CD8-positive, alpha-beta memory T cell (primary cell): ENCODE measurements at regions of chr6 and their contacts with region 1.

Region 1: DNA sequence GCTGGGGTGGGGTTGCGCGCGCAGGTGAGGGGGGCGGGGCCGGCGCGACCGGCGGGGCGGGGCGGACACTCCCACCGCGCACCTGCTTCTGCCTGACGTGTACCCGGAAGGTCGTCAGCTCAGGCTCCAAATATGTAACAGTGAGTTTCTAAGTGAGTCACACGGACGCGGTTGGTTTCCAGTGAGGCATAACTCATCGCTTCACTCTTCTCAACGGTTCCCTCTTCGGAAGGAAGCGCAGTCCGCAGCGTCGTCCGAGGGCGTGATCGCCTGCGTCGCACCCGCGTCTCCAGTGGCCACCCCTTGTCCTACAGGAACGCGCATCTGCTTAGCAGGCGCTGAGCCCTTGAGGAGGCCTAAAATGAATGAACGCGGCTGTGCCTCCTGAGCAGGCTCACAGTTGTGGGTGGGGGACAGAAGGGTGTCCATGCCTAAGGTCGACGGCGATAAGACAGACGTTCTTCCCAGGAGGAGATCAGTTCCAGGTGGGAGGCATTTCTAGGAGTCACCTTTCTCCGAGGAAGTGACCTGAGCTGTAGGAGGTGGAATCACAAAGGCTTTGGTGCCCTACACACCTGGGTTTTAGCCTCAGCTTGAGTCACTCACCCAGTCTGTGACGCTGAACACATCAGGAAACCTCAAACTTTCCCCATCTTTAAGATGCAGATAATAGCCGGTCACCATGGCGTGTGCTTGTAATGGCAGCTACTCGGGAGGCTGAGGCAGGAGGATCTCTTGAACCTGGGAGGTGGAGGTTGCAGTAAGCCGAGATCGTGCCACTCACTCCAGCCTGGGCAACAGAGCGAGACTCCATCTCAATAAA is 50.9 kb upstream of the EZR start:
- DNase-seq: peak in 3 of 5 donors; percentile 41 to 99 (median 57)
- H3K4me3 ChIP-seq: peak overlapping the region; percentile 79
- H3K4me3 Mint-ChIP-seq: peak overlapping the region; percentile 81 to 94 (median 89)
- H3K27ac ChIP-seq: peak overlapping the region; percentile 98
- H3K27ac Mint-ChIP-seq: peak overlapping the region; percentile 96 to 100 (median 99)
- H3K4me1 ChIP-seq: peaks cover 20% of the 10 kb centered on the region
- H3K4me1 Mint-ChIP-seq: peaks cover 23 to 46% (median 36%) of the 10 kb centered on the region in 3 donors
- H3K27me3 ChIP-seq: no peaks in the 10 kb centered on the region
- H3K27me3 Mint-ChIP-seq: peaks cover 0 to 4% of the 10 kb centered on the region in 2 donors

Region 2: DNA sequence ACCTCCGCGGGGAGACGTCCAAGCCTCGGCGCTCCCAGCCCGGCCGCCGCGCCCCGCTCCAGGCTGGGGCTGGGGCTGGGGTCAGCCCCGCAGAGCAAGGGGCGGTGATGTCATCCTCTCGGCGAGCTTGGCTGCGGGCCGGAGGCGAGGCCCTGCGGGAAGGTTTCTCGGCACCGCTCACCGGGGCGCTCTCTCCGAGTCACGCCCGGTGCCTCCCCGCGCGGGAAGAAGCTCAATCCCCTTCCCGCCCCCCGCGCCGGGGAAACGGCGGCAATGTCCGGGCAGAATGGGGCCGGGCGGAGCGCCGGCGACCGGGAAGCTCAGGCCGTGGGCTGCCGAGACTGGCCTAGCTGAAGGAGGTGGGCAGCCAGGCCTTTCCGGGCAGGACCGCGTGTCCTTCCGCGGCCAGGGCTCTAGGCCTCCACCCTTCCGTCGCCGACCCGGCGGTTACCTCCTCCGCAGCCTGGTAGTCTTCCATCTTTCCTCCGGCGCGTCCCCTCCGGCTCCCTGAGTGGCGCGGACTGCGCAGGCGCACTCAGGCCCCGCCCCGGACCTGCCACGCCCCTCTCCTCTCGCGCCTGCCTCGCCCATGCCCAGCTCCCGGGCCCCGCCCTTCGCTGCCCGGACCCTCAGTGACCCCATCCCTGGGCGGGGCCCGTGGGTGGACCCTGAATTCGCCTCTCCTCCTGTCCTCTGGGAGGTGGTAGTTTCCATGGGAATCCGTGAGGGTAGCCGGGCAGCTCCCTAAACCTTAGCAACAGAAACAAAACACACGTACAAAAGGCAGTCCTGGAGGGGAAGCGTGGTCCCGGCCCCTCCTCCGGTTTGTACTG is 225.6 kb before region 1 on chr6 and contains the start of gene DYNLT1:
- CTCF ChIA-PET with region 1: no interaction called
- POLR2A ChIA-PET with region 1: no interaction called
- DNase-seq: peak; percentile 76 to 89 (median 86)
- H3K4me3 ChIP-seq: peak within 1 kb of the TSS; percentile 82
- H3K4me3 Mint-ChIP-seq: peak within 1 kb of the TSS; percentile 97 to 100 (median 99)
- H3K27ac ChIP-seq: peak within 1 kb of the TSS; percentile 93
- H3K27ac Mint-ChIP-seq: peak within 1 kb of the TSS; percentile 90 to 100 (median 99)
- H3K4me1 ChIP-seq: peaks cover 55% of the 10 kb centered on the region
- H3K4me1 Mint-ChIP-seq: peaks cover 57 to 82% (median 67%) of the 10 kb centered on the region in 3 donors
- H3K27me3 ChIP-seq: no peaks in the 10 kb centered on the region
- H3K27me3 Mint-ChIP-seq: no peaks in the 10 kb centered on the region
- total RNA-seq, gene DYNLT1: 94.8 to 103 TPM

Region 3: DNA sequence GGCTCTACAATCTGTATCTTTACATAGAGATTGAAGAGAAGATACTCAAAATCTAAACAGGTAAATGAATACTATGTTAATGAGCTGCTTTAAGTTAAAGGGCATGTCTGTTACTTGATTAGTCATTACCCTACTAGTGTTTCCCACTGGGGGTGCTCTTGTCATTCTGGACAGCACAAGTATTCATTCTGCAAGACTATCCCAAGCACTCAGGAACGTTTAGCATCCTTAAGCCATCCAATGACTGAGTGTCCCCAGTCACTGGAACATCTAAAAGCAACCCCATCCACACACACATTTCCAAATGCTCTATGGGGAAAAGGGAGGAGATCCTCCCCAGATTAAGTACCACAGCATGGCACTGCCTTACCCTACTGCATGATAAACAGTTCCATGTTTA is 76.6 kb before region 1 on chr6:
- CTCF ChIA-PET with region 1: interaction called, 7 read pairs
- POLR2A ChIA-PET with region 1: interaction called, 13 read pairs
- DNase-seq: peak in 1 of 5 donors; percentile 46
- H3K4me3 ChIP-seq: no peak overlapping the region
- H3K4me3 Mint-ChIP-seq: peak overlapping the region in 5 of 7 donors; percentile 7 to 63 (median 49)
- H3K27ac ChIP-seq: no peak overlapping the region
- H3K27ac Mint-ChIP-seq: peak overlapping the region; percentile 51 to 93 (median 80)
- H3K4me1 ChIP-seq: peaks cover 74% of the 10 kb centered on the region
- H3K4me1 Mint-ChIP-seq: peaks cover 80 to 96% (median 93%) of the 10 kb centered on the region in 3 donors
- H3K27me3 ChIP-seq: no peaks in the 10 kb centered on the region
- H3K27me3 Mint-ChIP-seq: peaks cover 0 to 2% of the 10 kb centered on the region in 2 donors

Region 4: DNA sequence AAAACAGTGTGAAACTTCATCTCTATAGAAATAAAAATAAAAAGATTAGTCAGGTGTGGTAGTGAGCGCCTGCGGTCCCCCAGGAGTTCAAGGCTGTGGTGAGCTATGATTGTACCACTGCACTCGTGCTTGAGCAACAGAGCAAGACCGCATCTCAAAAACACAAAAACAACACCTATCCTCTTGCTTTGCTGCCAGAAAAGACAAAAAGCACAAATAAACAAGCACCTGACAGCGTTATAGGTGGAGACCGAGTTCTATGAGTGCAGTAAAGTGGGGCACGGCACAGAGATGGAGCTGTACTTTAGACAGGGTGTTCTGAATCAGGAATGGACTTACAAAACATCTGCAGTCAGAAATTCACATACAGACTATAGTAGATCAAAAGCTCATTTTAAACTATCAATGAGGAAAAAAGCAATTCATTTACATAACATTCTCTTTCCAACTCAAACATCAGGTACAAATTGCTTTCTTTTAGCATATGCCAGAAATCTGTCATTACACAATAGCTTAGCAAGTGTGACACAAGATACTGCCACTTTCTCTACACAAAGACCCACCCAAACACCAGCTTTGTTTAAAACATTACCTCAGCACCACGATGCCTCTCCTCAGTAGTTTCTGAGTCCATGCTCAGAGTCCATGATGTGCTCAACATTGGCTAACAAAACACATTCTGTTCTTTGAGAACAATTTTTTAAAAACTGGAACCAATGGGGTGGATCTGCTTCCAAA is 60.9 kb before region 1 on chr6:
- CTCF ChIA-PET with region 1: interaction called, 17 read pairs
- POLR2A ChIA-PET with region 1: interaction called, 68 read pairs
- DNase-seq: peak; percentile 29 to 81 (median 49)
- H3K4me3 ChIP-seq: no peak overlapping the region
- H3K4me3 Mint-ChIP-seq: peak overlapping the region; percentile 54 to 81 (median 67)
- H3K27ac ChIP-seq: peak overlapping the region; percentile 1
- H3K27ac Mint-ChIP-seq: peak overlapping the region; percentile 71 to 96 (median 92)
- H3K4me1 ChIP-seq: peaks cover 94% of the 10 kb centered on the region
- H3K4me1 Mint-ChIP-seq: peaks cover 94 to 100% (median 100%) of the 10 kb centered on the region in 3 donors
- H3K27me3 ChIP-seq: no peaks in the 10 kb centered on the region
- H3K27me3 Mint-ChIP-seq: no peaks in the 10 kb centered on the region

Region 5: DNA sequence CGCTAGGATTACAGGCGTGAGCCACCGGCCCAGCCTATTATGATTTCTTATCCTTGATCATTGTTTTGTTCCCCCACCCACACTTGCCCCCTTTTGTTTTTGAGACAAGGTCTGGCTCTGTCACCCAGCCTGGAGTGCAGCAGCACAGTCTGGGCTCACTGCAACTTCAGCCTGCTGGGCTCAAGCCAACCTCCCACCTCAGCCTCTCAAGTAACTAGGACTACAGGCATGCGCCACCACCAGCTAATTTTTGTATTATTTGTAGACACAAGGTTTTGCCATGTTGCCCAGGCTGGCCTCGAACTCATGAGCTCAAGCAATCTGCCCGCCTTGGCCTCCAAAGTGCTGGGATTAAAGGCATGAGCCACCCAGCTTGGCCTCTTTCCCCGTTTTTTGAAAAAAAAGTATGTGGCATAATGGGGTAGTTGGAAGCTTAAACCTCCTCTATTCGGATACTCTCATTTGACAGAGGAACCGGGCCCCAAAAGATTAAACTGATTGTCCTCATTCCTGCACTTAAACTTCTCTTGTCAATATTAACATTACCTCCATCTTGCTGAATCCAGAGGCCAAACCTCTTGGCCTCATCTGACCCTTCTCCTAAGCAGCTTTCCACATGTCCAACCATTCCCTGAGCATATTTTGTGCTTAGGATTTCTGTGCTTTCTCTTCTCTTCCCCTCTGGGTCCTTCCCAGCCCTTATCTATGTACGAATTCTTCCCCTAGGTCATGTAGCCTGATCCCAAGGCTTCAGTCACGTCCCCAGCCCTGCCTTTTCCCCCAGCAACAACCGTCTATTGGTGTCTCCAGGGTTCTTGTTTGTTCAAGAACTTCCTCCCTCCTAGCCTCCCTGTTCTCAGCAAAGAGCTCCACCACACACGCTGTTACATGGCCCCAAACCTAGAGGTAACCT is 44.7 kb before region 1 on chr6:
- CTCF ChIA-PET with region 1: interaction called, 4 read pairs
- POLR2A ChIA-PET with region 1: interaction called, 116 read pairs
- DNase-seq: no peak
- H3K4me3 ChIP-seq: no peak overlapping the region
- H3K4me3 Mint-ChIP-seq: peak overlapping the region in 1 of 7 donors; percentile 66
- H3K27ac ChIP-seq: peak overlapping the region; percentile 65
- H3K27ac Mint-ChIP-seq: peak overlapping the region in 1 of 8 donors; percentile 17
- H3K4me1 ChIP-seq: no peaks in the 10 kb centered on the region
- H3K4me1 Mint-ChIP-seq: peaks cover 9 to 35% (median 10%) of the 10 kb centered on the region in 3 donors
- H3K27me3 ChIP-seq: no peaks in the 10 kb centered on the region
- H3K27me3 Mint-ChIP-seq: no peaks in the 10 kb centered on the region

Region 6: DNA sequence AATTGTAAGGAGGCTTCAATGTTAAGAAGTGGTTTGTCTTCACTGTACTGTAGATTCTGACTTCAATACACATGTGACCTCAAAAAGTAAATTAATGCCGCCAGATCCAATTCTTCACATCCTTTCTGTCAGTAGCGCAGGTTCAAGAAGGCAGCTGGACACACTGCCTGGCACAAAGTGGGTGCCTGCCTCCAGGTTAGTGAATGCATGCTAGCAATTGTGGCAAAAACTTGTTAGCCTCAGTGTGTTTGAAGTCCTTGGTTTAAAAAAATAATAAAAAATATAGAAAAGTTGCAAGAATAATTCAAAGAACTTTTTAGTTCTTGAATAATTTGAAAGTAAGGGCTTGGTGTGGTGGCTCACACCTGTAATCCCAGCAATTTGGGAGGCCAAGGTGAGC is 11.1 kb before region 1 on chr6:
- CTCF ChIA-PET with region 1: interaction called, 43 read pairs
- POLR2A ChIA-PET with region 1: interaction called, 186 read pairs
- DNase-seq: no peak
- H3K4me3 ChIP-seq: no peak overlapping the region
- H3K4me3 Mint-ChIP-seq: no peak overlapping the region
- H3K27ac ChIP-seq: no peak overlapping the region
- H3K27ac Mint-ChIP-seq: peak overlapping the region in 4 of 8 donors; percentile 9 to 83 (median 50)
- H3K4me1 ChIP-seq: peaks cover 26% of the 10 kb centered on the region
- H3K4me1 Mint-ChIP-seq: peaks cover 10 to 17% (median 14%) of the 10 kb centered on the region in 3 donors
- H3K27me3 ChIP-seq: no peaks in the 10 kb centered on the region
- H3K27me3 Mint-ChIP-seq: peaks cover 0 to 3% of the 10 kb centered on the region in 2 donors